SK-N-SH (cell line): ENCODE measurements at regions of chr22 and their contacts with region 1.

Region 1: DNA sequence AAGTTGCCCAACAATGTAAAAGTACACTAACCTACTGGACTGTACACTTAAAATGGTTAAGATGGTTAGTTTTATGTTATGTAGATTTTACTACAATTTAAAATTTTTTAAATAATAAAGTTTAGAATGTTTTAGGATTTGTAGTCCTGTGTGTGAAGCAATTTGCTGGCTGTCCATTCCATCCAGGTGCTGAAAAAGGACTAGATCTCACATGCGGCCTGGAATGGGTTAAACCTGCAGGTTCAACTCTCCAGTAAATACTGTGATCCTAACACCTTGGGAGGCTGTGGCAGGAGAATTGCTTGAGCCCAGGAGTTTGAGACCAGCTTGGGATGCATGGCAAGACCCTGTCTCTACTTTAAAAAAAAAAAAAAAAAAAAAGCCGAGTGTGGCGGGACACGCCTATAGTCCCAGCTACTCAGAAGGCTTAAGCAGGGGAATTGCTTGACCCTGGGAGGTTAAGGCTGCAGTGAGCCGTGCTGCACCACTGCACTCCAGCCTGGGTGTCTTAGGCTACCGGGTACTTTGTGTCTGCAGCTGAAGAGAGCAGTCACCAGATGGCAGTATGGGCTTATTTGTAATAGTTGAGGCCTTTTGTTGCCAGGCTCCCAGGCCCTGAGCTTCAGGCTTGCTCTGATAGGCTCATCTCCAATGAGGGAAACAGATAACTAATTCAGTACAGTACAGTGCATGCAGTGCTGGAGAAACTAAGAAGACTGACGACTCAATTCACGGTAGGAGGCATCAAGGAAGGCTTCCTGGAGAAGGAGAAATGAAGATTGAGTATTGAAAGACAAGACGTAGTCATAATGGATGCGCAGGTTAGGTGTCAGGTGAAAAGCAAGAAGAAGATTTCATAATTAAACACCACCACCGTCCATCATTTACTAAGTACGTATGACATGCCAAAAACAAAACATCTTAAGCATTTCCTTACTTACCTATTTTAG is 64.7 kb upstream of the ASPHD2 start:
- DNase-seq: peak; percentile 73
- H3K4me3 ChIP-seq: no peak overlapping the region
- H3K27ac ChIP-seq: no peak overlapping the region
- H3K4me1 ChIP-seq: peaks cover 0 to 7% of the 10 kb centered on the region in 2 experiments; a peak in 2 of 4 replicates
- H3K27me3 ChIP-seq: no peaks in the 10 kb centered on the region
- CTCF ChIP-seq: peak; percentile 75
- EP300 ChIP-seq: peak in 1 of 2 experiments; percentile 20; a peak in 1 of 4 replicates
- RAD21 ChIP-seq: peak; percentile 87

Region 2: DNA sequence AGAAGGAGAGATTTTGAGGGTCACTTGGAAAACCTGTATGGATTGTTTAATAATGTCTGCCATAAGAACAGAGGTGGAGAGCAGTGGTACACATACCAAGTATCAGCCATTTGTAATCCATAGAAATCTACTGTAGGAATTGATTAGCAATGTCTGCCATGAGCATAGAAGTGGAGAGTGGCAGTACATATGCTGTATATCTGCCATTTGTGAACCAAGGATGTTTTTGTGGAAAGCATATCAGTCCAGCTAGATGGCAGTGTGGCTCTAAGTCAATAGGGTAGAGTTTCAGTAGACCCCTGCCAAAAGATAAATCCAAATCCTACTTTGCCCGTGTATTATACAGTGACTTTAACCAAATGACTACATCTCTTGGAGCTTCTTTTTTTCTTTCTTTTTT is 278.0 kb before region 1 on chr22:
- CTCF ChIA-PET with region 1: interaction called, 10 read pairs
- POLR2A ChIA-PET with region 1: no interaction called
- DNase-seq: peak; percentile 36
- H3K4me3 ChIP-seq: no peak overlapping the region
- H3K27ac ChIP-seq: no peak overlapping the region
- H3K4me1 ChIP-seq: no peaks in the 10 kb centered on the region
- H3K27me3 ChIP-seq: no peaks in the 10 kb centered on the region
- CTCF ChIP-seq: no peak
- EP300 ChIP-seq: no peak
- RAD21 ChIP-seq: peak; percentile 77

Region 3: GRCh38 chr22:26330966-26331625 is 33.2 kb before region 1 on chr22:
- CTCF ChIA-PET with region 1: interaction called, 10 read pairs
- POLR2A ChIA-PET with region 1: no interaction called
- DNase-seq: peak; percentile 81
- H3K4me3 ChIP-seq: no peak overlapping the region; a peak in 1 of 4 replicates
- H3K27ac ChIP-seq: no peak overlapping the region
- H3K4me1 ChIP-seq: peaks cover 0 to 3% of the 10 kb centered on the region in 2 experiments; a peak in 1 of 4 replicates
- H3K27me3 ChIP-seq: no peaks in the 10 kb centered on the region
- CTCF ChIP-seq: peak; percentile 85
- EP300 ChIP-seq: no peak
- RAD21 ChIP-seq: peak; percentile 96

Region 4: GRCh38 chr22:26377170-26377830 is 13.0 kb after region 1 on chr22:
- CTCF ChIA-PET with region 1: interaction called, 27 read pairs
- POLR2A ChIA-PET with region 1: no interaction called
- DNase-seq: no peak
- H3K4me3 ChIP-seq: no peak overlapping the region
- H3K27ac ChIP-seq: no peak overlapping the region
- H3K4me1 ChIP-seq: no peaks in the 10 kb centered on the region
- H3K27me3 ChIP-seq: no peaks in the 10 kb centered on the region; the same call in 1 of the 2 replicates
- CTCF ChIP-seq: no peak
- EP300 ChIP-seq: no peak
- RAD21 ChIP-seq: no peak

Region 5: GRCh38 chr22:26385164-26385563 is 20.8 kb after region 1 on chr22:
- CTCF ChIA-PET with region 1: interaction called, 27 read pairs
- POLR2A ChIA-PET with region 1: no interaction called
- DNase-seq: no peak
- H3K4me3 ChIP-seq: no peak overlapping the region
- H3K27ac ChIP-seq: no peak overlapping the region
- H3K4me1 ChIP-seq: no peaks in the 10 kb centered on the region
- H3K27me3 ChIP-seq: no peaks in the 10 kb centered on the region; the same call in 1 of the 2 replicates
- CTCF ChIP-seq: no peak
- EP300 ChIP-seq: no peak
- RAD21 ChIP-seq: no peak

Region 6: DNA sequence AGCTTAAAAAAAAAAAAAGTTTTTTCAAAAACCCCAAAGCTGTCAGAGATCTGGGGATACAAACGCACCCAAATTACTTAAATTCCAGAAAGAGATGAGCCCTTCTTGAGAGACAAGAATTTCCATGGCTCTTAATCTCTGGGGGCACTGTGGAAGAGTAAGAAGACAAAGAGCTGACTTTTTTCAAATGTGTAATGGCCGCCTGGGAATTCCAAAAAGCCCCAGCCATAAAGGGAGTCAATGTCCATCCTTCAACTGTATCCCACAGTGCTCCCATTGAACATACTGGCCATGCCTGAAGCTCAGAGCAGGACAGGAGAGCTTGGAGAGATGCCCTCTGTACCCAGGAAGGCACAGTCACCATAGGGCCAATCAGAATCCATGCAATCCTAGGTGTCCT is 27.3 kb after region 1 on chr22:
- CTCF ChIA-PET with region 1: interaction called, 15 read pairs
- POLR2A ChIA-PET with region 1: no interaction called
- DNase-seq: no peak
- H3K4me3 ChIP-seq: no peak overlapping the region
- H3K27ac ChIP-seq: no peak overlapping the region
- H3K4me1 ChIP-seq: no peaks in the 10 kb centered on the region
- H3K27me3 ChIP-seq: no peaks in the 10 kb centered on the region
- CTCF ChIP-seq: no peak
- EP300 ChIP-seq: no peak
- RAD21 ChIP-seq: no peak

Region 7: GRCh38 chr22:26398741-26399153 is 34.4 kb after region 1 on chr22:
- CTCF ChIA-PET with region 1: interaction called, 11 read pairs
- POLR2A ChIA-PET with region 1: no interaction called
- DNase-seq: peak; percentile 65
- H3K4me3 ChIP-seq: no peak overlapping the region; a peak in 1 of 4 replicates
- H3K27ac ChIP-seq: no peak overlapping the region
- H3K4me1 ChIP-seq: 0 out of 4 replicates have a peak, but pooled peaks cover 0 to 4% of the 10 kb centered on the region in 2 experiments
- H3K27me3 ChIP-seq: no peaks in the 10 kb centered on the region; the same call in 1 of the 2 replicates
- CTCF ChIP-seq: peak; percentile 84
- EP300 ChIP-seq: no peak
- RAD21 ChIP-seq: peak; percentile 91

Region 8: DNA sequence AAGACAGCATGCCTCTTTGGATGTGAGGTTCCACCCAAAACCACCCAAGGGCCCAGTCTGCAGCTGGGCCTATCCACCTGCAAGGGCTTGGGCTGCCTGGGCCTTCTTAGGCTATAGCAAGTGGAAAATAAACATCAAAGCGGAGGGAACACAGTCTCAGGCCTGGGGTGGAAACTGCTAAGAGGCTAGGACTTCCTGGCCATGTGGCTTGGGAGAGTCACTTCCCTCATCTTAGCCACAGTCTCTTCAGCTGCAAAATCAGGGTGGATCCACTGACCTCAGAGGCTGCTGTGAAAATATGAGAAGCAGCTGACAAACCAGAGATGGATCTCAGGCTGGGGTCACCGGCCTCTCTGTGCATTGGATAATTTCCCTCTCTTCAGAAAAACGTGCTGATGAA is 178.5 kb after region 1 on chr22:
- CTCF ChIA-PET with region 1: no interaction called
- POLR2A ChIA-PET with region 1: no interaction called
- DNase-seq: no peak
- H3K4me3 ChIP-seq: no peak overlapping the region
- H3K27ac ChIP-seq: no peak overlapping the region
- H3K4me1 ChIP-seq: no peaks in the 10 kb centered on the region; a peak in 1 of 4 replicates
- H3K27me3 ChIP-seq: no peaks in the 10 kb centered on the region
- CTCF ChIP-seq: no peak
- EP300 ChIP-seq: no peak
- RAD21 ChIP-seq: no peak